Posterior vena cava (tissue), 2 donors: ENCODE measurements at regions of chr1 and their contacts with region 1.

Region 1: DNA sequence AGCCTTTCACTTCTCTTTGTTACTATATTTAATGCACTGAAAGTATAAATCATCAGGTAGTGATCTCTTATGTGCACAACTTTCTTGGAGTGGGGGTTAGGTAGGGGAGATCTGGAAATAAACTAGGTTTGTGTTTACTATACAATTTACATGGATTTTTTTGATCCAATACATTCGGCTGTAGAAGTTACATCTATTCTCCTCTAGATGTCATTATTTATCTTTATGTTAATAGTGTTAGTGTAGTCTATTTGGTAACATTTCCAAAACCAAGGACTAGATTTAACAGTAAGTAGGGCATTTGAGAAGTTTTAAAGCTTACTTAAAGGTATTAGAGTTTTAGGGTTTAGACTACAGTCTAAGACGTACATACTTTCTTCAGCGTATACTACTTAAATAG is 5.4 kb downstream of the VPS45 start:
- DNase-seq: no peak

Region 2: DNA sequence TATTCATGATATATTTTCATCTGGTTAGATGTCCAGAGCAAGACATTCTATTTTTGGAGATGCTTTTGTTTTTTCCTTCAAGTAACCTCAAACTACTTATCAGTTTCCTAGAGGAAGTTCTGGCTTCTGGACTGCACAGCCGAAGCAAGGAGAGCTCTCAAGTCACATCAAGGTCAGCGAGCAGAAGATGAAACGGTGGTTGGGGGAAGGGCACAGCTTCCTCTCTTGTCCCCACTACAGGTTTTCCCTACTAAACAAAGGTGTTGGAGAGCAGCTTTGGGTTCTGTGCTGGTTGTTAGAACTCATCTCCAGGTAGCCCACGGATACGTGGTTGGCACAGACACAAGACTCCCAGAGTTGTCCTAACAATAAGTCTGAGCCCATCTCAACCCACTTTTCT is 71.6 kb after region 1 on chr1:
- intact Hi-C with region 1: no loop called
- DNase-seq: no peak

Region 3: GRCh38 chr1:150162862-150163706 is 90.1 kb after region 1 on chr1:
- intact Hi-C with region 1: loop called (anchors 5 to 10 kb)
- DNase-seq: peak; percentile 95

Region 4: GRCh38 chr1:150168960-150169601 is 96.1 kb after region 1 on chr1:
- intact Hi-C with region 1: loop called (anchors 5 to 10 kb)
- DNase-seq: peak; percentile 90